SK-N-SH (cell line): ENCODE measurements at regions of chr19 and their contacts with region 1.

Region 1: GRCh38 chr19:13748169-13748828 is 16.0 kb upstream of the MRI1 start:
- DNase-seq: peak; percentile 37
- H3K4me3 ChIP-seq: peak overlapping the region; percentile 69 to 92
- H3K27ac ChIP-seq: peak overlapping the region; percentile 60 to 80
- H3K4me1 ChIP-seq: peaks cover 0 to 7% of the 10 kb centered on the region in 2 experiments; a peak in 1 of 4 replicates
- H3K27me3 ChIP-seq: no peaks in the 10 kb centered on the region
- CTCF ChIP-seq: no peak
- EP300 ChIP-seq: no peak
- RAD21 ChIP-seq: no peak

Region 2: GRCh38 chr19:13731147-13731964 is 16.9 kb before region 1 on chr19:
- CTCF ChIA-PET with region 1: no interaction called
- POLR2A ChIA-PET with region 1: interaction called, 12 read pairs
- DNase-seq: peak; percentile 96
- H3K4me3 ChIP-seq: peak overlapping the region; percentile 61 to 72
- H3K27ac ChIP-seq: peak overlapping the region; percentile 89 to 100
- H3K4me1 ChIP-seq: peaks cover 7 to 18% of the 10 kb centered on the region in 2 experiments; a peak in 3 of 4 replicates
- H3K27me3 ChIP-seq: no peaks in the 10 kb centered on the region
- CTCF ChIP-seq: no peak
- EP300 ChIP-seq: peak; percentile 43 to 95; a peak in 3 of 4 replicates
- RAD21 ChIP-seq: no peak